OCI-LY7 (cell line): ENCODE measurements at regions of chr19 and their contacts with region 1.

Region 1: DNA sequence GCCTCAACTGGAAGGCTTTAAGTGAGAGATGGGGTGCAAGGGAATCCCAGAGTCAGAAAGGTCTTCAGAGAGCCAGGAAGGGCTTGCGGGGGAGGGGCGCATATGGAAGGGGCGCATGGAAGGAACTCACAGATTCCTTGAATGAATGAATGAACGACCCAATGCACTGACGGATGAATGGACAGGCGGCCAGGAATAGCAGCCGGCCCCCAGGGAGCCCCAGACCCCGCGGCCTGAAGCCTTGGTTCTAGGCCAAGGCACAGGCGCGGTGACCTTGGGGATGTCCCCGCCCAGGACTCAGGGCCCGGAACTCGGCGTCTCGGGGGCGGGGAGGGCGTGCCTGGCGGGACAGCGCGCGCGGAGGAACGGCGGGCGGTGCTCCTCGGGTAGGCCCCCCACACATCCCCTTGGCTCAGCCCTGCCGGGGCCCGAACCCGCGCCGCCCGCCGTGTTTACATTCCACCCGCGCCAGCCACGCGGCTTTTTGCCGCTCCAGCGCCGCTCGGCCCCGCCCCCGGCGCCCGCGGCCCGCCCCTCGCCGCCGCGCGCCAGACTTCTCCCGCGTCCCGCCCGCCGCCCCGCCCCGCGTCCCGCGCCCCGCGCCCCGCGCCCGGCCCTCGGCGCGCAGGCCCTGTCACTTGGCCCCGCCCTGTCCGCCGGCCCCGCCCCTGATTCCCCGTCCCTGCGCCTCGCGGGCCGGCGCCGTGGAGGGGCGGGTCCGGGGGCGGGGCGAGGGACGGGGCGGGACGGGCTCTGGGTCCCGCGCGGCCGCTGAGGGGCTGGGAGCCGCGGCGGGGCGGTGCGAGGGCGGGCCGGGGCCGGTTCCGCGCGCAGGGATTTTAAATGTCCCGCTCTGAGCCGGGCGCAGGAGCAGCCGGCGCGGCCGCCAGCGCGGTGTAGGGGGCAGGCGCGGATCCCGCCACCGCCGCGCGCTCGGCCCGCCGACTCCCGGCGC is at the start of gene CCNE1:
- DNase-seq: peak; percentile 86
- H3K4me3 ChIP-seq: peak within 1 kb of the TSS; percentile 80
- H3K27ac ChIP-seq: peak within 1 kb of the TSS; percentile 70
- H3K4me1 ChIP-seq: peaks cover 50% of the 10 kb centered on the region
- CTCF ChIP-seq: no peak
- total RNA-seq, gene CCNE1: 13.4 and 23.2 TPM in 2 replicates

Region 2: GRCh38 chr19:29760752-29761502 is 50.5 kb before region 1 on chr19:
- CTCF ChIA-PET with region 1: no interaction called
- POLR2A ChIA-PET with region 1: no interaction called
- intact Hi-C with region 1: loop called (anchors 1 kb)
- DNase-seq: no peak
- H3K4me3 ChIP-seq: no peak overlapping the region
- H3K27ac ChIP-seq: no peak overlapping the region
- H3K4me1 ChIP-seq: peaks cover 4% of the 10 kb centered on the region
- CTCF ChIP-seq: no peak

Region 3: DNA sequence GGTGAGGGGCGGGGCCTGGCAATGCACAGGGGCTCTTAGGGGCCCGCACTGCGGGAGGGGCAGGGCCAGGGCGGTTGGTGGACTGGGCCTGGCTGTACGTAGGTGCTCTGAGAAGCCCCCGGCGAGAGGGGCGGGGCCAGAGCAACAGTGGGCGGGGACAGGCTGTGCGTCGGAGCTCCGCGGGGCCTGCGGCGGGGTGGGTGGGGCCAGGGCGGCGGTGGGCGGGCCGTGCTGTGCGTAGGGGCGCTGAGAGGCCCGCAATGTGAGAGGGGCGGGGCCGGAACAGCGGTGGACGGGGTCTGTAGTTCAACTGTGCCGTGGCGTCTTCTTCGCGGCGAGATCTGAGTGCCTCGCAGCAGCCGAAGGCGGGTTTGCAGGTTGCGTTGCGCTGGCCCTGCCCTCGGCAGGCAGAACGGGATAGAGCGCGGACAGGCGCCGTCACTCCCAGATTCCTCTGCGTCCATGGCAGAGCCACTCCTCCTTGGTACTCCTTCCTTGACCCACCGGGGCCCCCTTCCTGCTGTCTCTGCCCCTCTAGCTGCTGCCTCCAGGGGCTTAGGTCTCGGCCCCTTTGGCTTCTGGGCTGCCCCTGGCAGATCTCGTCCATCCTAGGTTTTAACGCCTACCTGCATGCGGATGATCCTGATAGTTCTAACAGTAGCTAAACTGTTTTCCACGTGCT is 33.6 kb after region 1 on chr19:
- CTCF ChIA-PET with region 1: no interaction called
- POLR2A ChIA-PET with region 1: interaction called, 6 read pairs
- intact Hi-C with region 1: loop called (anchors 1 kb)
- DNase-seq: peak; percentile 91
- H3K4me3 ChIP-seq: peak overlapping the region; percentile 73
- H3K27ac ChIP-seq: no peak overlapping the region
- H3K4me1 ChIP-seq: peaks cover 18% of the 10 kb centered on the region
- CTCF ChIP-seq: no peak